ENCODE measurements at regions of chr17 and their contacts with region 1.

Region 1: GRCh38 chr17:8894673-8895578 is 27.5 kb upstream of the PIK3R6 start:
- H3K4me3 ChIP-seq: no peak overlapping the region
- H3K27ac ChIP-seq: no peak overlapping the region
- H3K4me1 ChIP-seq: no peaks in the 10 kb centered on the region
- CTCF ChIP-seq: peak; percentile 68

Region 2: DNA sequence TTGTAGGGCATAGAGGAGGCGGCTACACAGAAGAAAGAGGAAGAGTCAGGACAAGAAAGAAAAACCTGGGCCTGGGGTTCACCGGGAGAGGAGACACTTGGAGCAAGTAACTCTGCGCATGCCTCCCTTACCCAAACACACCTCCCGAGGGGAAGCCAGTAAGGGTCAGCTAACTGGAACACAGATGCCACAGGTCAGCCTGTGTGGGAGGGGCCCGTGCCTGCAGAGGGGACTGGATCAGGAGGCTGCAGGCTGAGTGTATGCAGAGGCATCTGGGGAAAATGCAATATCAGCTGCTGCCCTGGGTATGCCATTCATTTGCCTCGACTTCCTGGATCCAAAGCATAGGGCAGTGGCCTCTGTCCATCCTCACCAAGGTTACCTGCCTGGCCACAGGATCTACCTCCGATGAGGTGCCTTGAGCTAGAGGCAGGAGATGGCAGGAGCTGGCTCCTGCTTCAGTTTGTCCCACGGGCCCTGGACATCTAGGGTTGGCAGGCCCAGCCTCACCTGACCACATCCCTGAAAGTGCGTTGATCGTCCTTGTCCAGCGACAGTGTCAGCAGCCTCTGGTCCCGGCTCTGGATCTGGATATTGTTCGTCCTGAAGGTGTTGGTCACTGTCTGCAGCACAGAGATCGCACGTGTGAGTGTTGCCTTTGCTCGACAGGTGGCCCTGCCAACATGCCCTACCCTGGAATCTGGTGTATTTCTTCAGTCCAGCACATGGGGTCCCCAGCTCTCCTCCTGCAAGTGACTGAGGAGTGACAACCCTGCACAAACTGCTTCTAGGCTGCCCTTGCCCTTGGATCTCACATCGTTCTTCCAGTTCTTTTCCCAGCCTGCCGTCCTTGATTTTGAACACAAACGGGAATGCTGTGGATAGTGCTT is 91.2 kb before region 1 on chr17:
- CTCF ChIA-PET with region 1: interaction called, 11 read pairs
- POLR2A ChIA-PET with region 1: no interaction called
- H3K4me3 ChIP-seq: no peak overlapping the region
- H3K27ac ChIP-seq: no peak overlapping the region
- H3K4me1 ChIP-seq: no peaks in the 10 kb centered on the region
- CTCF ChIP-seq: no peak

Region 3: GRCh38 chr17:8909586-8910270 is 14.8 kb after region 1 on chr17:
- CTCF ChIA-PET with region 1: interaction called, 13 read pairs
- POLR2A ChIA-PET with region 1: no interaction called
- H3K4me3 ChIP-seq: no peak overlapping the region
- H3K27ac ChIP-seq: no peak overlapping the region
- H3K4me1 ChIP-seq: no peaks in the 10 kb centered on the region
- CTCF ChIP-seq: no peak

Region 4: GRCh38 chr17:8930649-8931048 is 35.7 kb after region 1 on chr17:
- CTCF ChIA-PET with region 1: no interaction called
- POLR2A ChIA-PET with region 1: no interaction called
- H3K4me3 ChIP-seq: no peak overlapping the region
- H3K27ac ChIP-seq: no peak overlapping the region
- H3K4me1 ChIP-seq: no peaks in the 10 kb centered on the region
- CTCF ChIP-seq: no peak

Region 5: GRCh38 chr17:8985054-8985701 is 90.3 kb after region 1 on chr17:
- CTCF ChIA-PET with region 1: no interaction called
- POLR2A ChIA-PET with region 1: no interaction called
- H3K4me3 ChIP-seq: no peak overlapping the region
- H3K27ac ChIP-seq: no peak overlapping the region
- H3K4me1 ChIP-seq: no peaks in the 10 kb centered on the region
- CTCF ChIP-seq: no peak

Measured in HEK293 (cell line).